Activated CD4-positive, alpha-beta memory T cell treated with anti-CD3 and anti-CD28 coated beads for 36 hours (primary cell): ENCODE measurements at regions of chr7 and their contacts with region 1.

Region 1: DNA sequence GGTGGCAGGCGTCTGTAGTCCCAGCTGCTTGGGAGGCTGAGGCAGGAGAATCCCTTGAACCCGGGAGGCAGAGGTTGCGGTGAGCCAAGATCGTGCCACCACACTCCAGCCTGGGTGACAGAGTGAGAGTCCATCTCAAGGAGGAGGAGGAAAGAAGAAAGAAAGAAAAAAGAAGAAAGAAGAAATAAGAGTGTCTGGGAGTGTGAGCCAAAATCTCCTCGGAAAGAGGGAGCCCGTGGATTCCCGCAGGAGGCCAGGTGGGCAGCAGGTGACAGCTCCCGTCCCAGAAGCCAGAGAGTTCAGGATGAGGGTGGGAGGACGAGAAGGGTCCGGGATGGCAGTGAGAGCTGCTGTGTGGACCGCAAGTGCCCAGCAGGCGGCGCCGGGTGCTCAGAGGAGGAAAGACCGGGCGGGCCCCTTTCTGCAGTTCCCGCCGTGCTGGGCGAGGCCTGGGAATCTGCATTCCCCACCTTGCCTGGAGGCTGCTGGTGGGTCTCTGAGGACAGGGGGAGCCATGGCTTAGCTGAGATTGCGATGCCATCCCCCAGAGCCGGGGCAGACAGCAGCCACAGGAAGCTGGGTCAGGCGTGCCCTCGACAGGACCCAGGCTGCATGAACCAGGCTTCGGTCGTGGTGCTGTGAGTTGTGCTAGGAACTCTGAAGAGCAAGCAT is 17.1 kb upstream of the AMZ1 start:
- DNase-seq: peak; percentile 80
- H3K4me3 Mint-ChIP-seq: no peak overlapping the region
- H3K27ac Mint-ChIP-seq: no peak overlapping the region
- H3K4me1 Mint-ChIP-seq: peaks cover 6% of the 10 kb centered on the region
- H3K27me3 Mint-ChIP-seq: peaks cover 8% of the 10 kb centered on the region

Region 2: GRCh38 chr7:2651847-2652735 is 18.8 kb before region 1 on chr7:
- CTCF ChIA-PET with region 1: interaction called, 13 read pairs
- POLR2A ChIA-PET with region 1: no interaction called
- intact Hi-C with region 1: no loop called
- DNase-seq: no peak
- H3K4me3 Mint-ChIP-seq: no peak overlapping the region
- H3K27ac Mint-ChIP-seq: no peak overlapping the region
- H3K4me1 Mint-ChIP-seq: no peaks in the 10 kb centered on the region
- H3K27me3 Mint-ChIP-seq: no peaks in the 10 kb centered on the region

Region 3: GRCh38 chr7:2698581-2699288 is 27.9 kb after region 1 on chr7:
- CTCF ChIA-PET with region 1: interaction called, 10 read pairs
- POLR2A ChIA-PET with region 1: no interaction called
- intact Hi-C with region 1: no loop called
- DNase-seq: peak; percentile 79
- H3K4me3 Mint-ChIP-seq: peak overlapping the region; percentile 30
- H3K27ac Mint-ChIP-seq: peak overlapping the region; percentile 40
- H3K4me1 Mint-ChIP-seq: peaks cover 18% of the 10 kb centered on the region
- H3K27me3 Mint-ChIP-seq: no peaks in the 10 kb centered on the region

Region 4: DNA sequence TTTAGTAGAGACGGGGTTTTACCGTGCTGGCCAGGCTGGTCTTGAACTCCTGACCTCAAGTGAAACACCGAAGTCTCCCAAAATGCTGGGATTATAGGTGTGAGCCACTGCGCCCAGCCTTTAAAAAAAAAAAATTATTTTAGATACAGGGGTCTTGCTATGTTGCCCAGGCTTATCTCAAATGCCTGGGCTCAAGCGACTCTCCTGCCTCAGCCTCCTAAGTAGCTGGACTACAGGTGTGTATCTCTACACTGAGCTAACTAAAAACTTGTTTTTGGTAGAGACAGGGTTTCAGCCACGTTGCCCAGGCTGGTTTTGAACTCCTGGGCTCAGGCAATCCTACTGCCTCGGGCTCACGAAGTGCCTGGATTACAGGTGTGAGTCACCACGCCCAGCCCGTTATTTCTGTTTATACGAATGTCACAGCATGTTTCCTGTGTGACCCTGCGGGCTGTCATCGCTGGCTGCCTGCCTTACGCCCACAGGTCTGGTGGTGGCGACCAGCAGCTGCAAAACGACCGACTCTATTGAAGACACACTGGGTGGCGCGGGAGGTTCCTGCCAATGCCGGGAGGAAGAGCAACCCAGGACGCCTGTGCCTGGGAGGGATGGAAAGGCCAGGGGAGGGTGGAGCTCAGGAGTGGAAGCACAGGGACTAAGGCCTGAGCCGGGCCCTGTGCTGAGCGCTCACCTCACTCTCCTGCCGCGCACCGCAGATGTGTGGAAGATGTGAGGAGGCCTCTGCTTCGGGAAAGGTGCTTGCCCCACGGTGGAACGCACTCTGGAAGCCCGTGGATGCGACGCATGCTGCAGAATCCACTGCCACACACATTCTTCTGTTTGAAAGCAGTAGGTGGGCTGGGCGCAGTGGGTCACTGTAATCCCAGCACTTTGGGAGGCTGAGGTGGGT is 50.0 kb after region 1 on chr7:
- CTCF ChIA-PET with region 1: interaction called, 21 read pairs
- POLR2A ChIA-PET with region 1: no interaction called
- intact Hi-C with region 1: no loop called
- DNase-seq: peak; percentile 95
- H3K4me3 Mint-ChIP-seq: peak overlapping the region; percentile 16
- H3K27ac Mint-ChIP-seq: peak overlapping the region; percentile 56
- H3K4me1 Mint-ChIP-seq: peaks cover 47% of the 10 kb centered on the region
- H3K27me3 Mint-ChIP-seq: no peaks in the 10 kb centered on the region

Region 5: GRCh38 chr7:3730276-3730675 is 1059.4 kb after region 1 on chr7:
- CTCF ChIA-PET with region 1: no interaction called
- POLR2A ChIA-PET with region 1: no interaction called
- intact Hi-C with region 1: no loop called
- DNase-seq: no peak
- H3K4me3 Mint-ChIP-seq: no peak overlapping the region
- H3K27ac Mint-ChIP-seq: no peak overlapping the region
- H3K4me1 Mint-ChIP-seq: no peaks in the 10 kb centered on the region
- H3K27me3 Mint-ChIP-seq: peaks cover 2% of the 10 kb centered on the region